CD4-positive, alpha-beta memory T cell (primary cell): ENCODE measurements at regions of chr12 and their contacts with region 1.

Region 1: GRCh38 chr12:121060149-121061001 is 21.3 kb upstream of the OASL start:
- DNase-seq: peak; percentile 69 to 77 (median 74)
- H3K4me3 ChIP-seq: peak overlapping the region; percentile 79 to 81
- H3K4me3 Mint-ChIP-seq: peak overlapping the region; percentile 80 to 91 (median 86)
- H3K27ac ChIP-seq: peak overlapping the region; percentile 66
- H3K27ac Mint-ChIP-seq: peak overlapping the region; percentile 84 to 97 (median 94)
- H3K4me1 ChIP-seq: peaks cover 4% of the 10 kb centered on the region
- H3K4me1 Mint-ChIP-seq: peaks cover 10 to 14% (median 12%) of the 10 kb centered on the region in 4 donors
- H3K27me3 ChIP-seq: no peaks in the 10 kb centered on the region
- H3K27me3 Mint-ChIP-seq: no peaks in the 10 kb centered on the region

Region 2: GRCh38 chr12:120713861-120714482 is 346.4 kb before region 1 on chr12:
- CTCF ChIA-PET with region 1: no interaction called
- POLR2A ChIA-PET with region 1: no interaction called
- intact Hi-C with region 1: no loop called
- DNase-seq: peak; percentile 75 to 83 (median 81)
- H3K4me3 ChIP-seq: no peak overlapping the region
- H3K4me3 Mint-ChIP-seq: peak overlapping the region in 6 of 8 donors; percentile 20 to 81 (median 52)
- H3K27ac ChIP-seq: peak overlapping the region; percentile 11
- H3K27ac Mint-ChIP-seq: peak overlapping the region; percentile 21 to 90 (median 84)
- H3K4me1 ChIP-seq: peaks cover 26% of the 10 kb centered on the region
- H3K4me1 Mint-ChIP-seq: peaks cover 20 to 46% (median 31%) of the 10 kb centered on the region in 4 donors
- H3K27me3 ChIP-seq: no peaks in the 10 kb centered on the region
- H3K27me3 Mint-ChIP-seq: no peaks in the 10 kb centered on the region

Region 3: GRCh38 chr12:120944645-120945231 is 115.6 kb before region 1 on chr12:
- CTCF ChIA-PET with region 1: interaction called, 11 read pairs
- POLR2A ChIA-PET with region 1: no interaction called
- intact Hi-C with region 1: loop called (anchors 1 kb)
- DNase-seq: peak; percentile 43 to 57 (median 51)
- H3K4me3 ChIP-seq: no peak overlapping the region
- H3K4me3 Mint-ChIP-seq: no peak overlapping the region
- H3K27ac ChIP-seq: no peak overlapping the region
- H3K27ac Mint-ChIP-seq: peak overlapping the region in 2 of 7 donors; percentile 25 to 53
- H3K4me1 ChIP-seq: no peaks in the 10 kb centered on the region
- H3K4me1 Mint-ChIP-seq: peaks cover 0 to 4% (median 2%) of the 10 kb centered on the region in 4 donors
- H3K27me3 ChIP-seq: no peaks in the 10 kb centered on the region
- H3K27me3 Mint-ChIP-seq: peaks cover 0 to 1% of the 10 kb centered on the region in 2 donors

Region 4: DNA sequence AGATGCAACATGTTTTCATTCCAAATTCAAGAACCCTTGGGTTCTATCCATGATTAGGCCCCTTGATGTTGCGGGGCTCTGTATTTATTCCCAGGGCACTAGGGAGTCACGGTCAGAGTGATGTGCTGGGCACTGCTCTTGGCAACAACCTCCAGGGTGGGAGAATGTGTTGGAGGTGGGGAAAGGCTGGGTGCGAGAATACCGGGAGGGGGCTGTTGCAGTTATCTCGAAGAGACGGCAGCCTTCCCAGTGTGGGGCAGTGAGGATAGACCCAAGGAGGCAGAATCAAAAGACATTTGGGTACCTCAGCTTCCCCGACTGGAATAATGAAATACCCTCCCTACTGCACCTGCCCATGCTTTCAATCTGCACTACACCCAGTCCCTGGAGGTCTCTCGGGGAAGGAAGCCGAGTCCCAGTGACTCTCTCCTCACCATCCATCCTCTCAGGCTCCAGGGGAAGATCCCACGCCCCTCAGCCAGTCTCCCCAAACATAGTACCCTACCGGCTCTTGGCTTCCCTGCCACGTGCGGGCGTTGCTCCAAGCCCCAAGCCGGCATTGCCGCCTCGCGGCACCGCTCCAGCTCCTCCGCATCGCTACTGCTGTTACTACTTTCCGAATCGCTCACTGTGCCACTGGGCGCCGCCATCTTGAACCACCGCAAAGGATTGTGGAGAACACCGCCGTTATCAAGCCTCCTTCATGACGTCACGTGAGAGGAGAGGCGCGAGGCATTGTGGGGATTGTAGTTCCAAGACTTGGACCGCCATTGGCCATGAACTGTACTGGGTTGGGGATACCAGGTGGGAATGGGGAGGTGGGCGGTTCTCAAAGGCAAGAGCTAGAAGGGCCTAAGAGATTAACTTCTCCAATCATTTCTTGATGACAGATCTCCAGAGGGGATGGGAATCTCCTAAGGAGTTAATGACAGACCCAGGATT is 44.3 kb before region 1 on chr12 and contains the start of gene C12orf43:
- CTCF ChIA-PET with region 1: interaction called, 6 read pairs
- POLR2A ChIA-PET with region 1: interaction called, 5 read pairs
- intact Hi-C with region 1: loop called (anchors 1 kb)
- DNase-seq: peak; percentile 87 to 94 (median 89)
- H3K4me3 ChIP-seq: peak within 1 kb of the TSS; percentile 90 to 91
- H3K4me3 Mint-ChIP-seq: peak within 1 kb of the TSS; percentile 90 to 100 (median 96)
- H3K27ac ChIP-seq: peak within 1 kb of the TSS; percentile 71
- H3K27ac Mint-ChIP-seq: peak within 1 kb of the TSS; percentile 78 to 99 (median 97)
- H3K4me1 ChIP-seq: peaks cover 15% of the 10 kb centered on the region
- H3K4me1 Mint-ChIP-seq: peaks cover 17 to 29% (median 23%) of the 10 kb centered on the region in 4 donors
- H3K27me3 ChIP-seq: no peaks in the 10 kb centered on the region
- H3K27me3 Mint-ChIP-seq: no peaks in the 10 kb centered on the region
- total RNA-seq, gene C12orf43: 13.8 to 15.4 TPM

Region 5: DNA sequence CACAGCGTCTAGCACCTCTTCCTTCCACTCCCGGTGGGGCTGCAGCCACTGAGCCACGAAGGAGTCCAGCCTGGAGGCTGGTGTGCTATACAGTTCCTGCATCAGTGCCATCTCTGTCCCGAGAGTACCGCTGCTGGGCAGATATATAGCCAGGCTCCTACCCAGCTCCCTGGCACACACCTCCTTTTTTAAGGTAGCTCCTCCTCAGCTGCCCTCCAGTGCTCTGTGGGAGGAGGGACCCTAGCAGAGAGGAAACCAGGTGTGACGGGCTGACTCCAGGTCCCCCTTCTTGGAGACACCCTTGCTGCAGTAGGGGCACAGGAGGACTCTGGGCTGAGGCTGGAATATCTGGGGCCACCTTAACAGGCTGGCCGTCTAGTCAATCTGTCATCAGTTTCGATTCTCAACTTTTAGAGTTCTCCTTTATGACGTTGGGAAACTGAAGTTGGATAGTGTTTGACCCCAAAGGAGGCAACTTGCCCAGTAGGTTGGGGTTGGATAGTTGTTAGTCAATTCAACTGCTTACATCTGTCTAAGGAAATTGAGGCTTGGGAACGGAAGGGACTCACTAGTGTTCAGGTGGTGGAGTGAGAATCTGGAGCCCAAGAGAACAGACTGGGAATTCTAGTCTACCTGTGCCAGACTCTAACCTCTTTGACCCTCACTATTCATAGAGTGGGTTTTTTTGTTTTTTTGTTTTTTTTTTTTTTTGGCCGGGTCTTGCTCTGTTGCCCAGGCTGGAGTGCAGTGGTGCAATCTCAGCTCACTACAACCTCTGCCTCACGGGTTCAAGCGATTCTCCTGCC is 21.3 kb before region 1 on chr12 and contains the start of gene OASL:
- CTCF ChIA-PET with region 1: interaction called, 65 read pairs
- POLR2A ChIA-PET with region 1: interaction called, 18 read pairs
- intact Hi-C with region 1: loop called (anchors 1 kb)
- DNase-seq: peak; percentile 62 to 82 (median 62)
- H3K4me3 ChIP-seq: peak within 1 kb of the TSS; percentile 80 to 86
- H3K4me3 Mint-ChIP-seq: peak within 1 kb of the TSS; percentile 97 to 100 (median 98)
- H3K27ac ChIP-seq: peak within 1 kb of the TSS; percentile 78
- H3K27ac Mint-ChIP-seq: peak within 1 kb of the TSS; percentile 96 to 100 (median 98)
- H3K4me1 ChIP-seq: peaks cover 45% of the 10 kb centered on the region
- H3K4me1 Mint-ChIP-seq: peaks cover 28 to 65% (median 38%) of the 10 kb centered on the region in 4 donors
- H3K27me3 ChIP-seq: no peaks in the 10 kb centered on the region
- H3K27me3 Mint-ChIP-seq: peaks cover 3 to 5% of the 10 kb centered on the region in 2 donors
- total RNA-seq, gene OASL: 7.2 to 9.7 TPM

Region 6: DNA sequence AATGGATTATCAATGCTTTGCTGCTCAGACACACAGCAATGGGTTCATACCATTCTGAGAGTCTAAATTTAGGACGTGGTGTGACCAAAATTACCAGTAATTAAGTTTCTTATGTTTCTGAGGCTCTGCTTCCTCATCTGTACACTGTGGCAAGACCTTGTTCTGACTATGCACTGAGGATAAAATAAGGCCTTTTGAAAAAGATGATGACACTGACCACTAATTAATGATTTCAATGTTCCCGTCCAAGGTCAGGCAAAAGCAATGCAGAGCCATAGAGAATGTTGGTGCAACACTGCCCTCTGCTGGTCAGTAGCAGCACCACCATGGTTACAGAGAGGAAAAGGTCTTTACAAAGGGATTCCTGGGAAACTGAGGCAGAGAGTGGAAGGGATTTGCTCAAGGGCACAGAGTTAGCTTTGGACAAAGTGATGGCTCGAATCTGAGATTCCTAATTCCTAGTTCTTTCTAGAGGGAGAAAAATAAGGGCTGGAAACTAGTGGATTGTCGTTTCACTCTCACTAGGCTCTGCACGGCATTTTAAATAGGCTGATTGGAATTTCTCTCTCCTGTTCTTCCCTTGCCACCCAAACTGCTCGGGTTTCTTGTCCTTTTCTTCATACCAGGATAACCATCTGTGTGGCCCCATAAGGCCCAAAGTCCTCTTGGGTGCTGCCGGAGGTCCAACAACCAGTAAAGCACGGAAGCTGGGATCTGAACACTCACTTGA is 50.0 kb after region 1 on chr12:
- CTCF ChIA-PET with region 1: interaction called, 36 read pairs
- POLR2A ChIA-PET with region 1: no interaction called
- intact Hi-C with region 1: loop called (anchors 1 kb)
- DNase-seq: peak in 4 of 5 donors; percentile 50 to 56 (median 54)
- H3K4me3 ChIP-seq: no peak overlapping the region
- H3K4me3 Mint-ChIP-seq: no peak overlapping the region
- H3K27ac ChIP-seq: no peak overlapping the region
- H3K27ac Mint-ChIP-seq: peak overlapping the region in 2 of 7 donors; percentile 2 to 3
- H3K4me1 ChIP-seq: no peaks in the 10 kb centered on the region
- H3K4me1 Mint-ChIP-seq: peaks cover 0 to 5% (median 4%) of the 10 kb centered on the region in 4 donors
- H3K27me3 ChIP-seq: no peaks in the 10 kb centered on the region
- H3K27me3 Mint-ChIP-seq: no peaks in the 10 kb centered on the region

Region 7: GRCh38 chr12:121230538-121230907 is 170.1 kb after region 1 on chr12:
- CTCF ChIA-PET with region 1: interaction called, 6 read pairs
- POLR2A ChIA-PET with region 1: no interaction called
- intact Hi-C with region 1: loop called (anchors 1 kb)
- DNase-seq: no peak
- H3K4me3 ChIP-seq: no peak overlapping the region
- H3K4me3 Mint-ChIP-seq: no peak overlapping the region
- H3K27ac ChIP-seq: no peak overlapping the region
- H3K27ac Mint-ChIP-seq: peak overlapping the region in 6 of 7 donors; percentile 59 to 82 (median 71)
- H3K4me1 ChIP-seq: peaks cover 37% of the 10 kb centered on the region
- H3K4me1 Mint-ChIP-seq: peaks cover 12 to 32% (median 26%) of the 10 kb centered on the region in 4 donors
- H3K27me3 ChIP-seq: no peaks in the 10 kb centered on the region
- H3K27me3 Mint-ChIP-seq: no peaks in the 10 kb centered on the region

Region 8: GRCh38 chr12:122422730-122423257 is 1362.4 kb after region 1 on chr12:
- CTCF ChIA-PET with region 1: no interaction called
- POLR2A ChIA-PET with region 1: no interaction called
- intact Hi-C with region 1: no loop called
- DNase-seq: peak in 3 of 5 donors; percentile 14 to 18 (median 15)
- H3K4me3 ChIP-seq: peak overlapping the region; percentile 53 to 67
- H3K4me3 Mint-ChIP-seq: peak overlapping the region; percentile 88 to 92 (median 90)
- H3K27ac ChIP-seq: peak overlapping the region; percentile 43
- H3K27ac Mint-ChIP-seq: peak overlapping the region; percentile 47 to 93 (median 91)
- H3K4me1 ChIP-seq: peaks cover 43% of the 10 kb centered on the region
- H3K4me1 Mint-ChIP-seq: peaks cover 20 to 37% (median 29%) of the 10 kb centered on the region in 4 donors
- H3K27me3 ChIP-seq: no peaks in the 10 kb centered on the region
- H3K27me3 Mint-ChIP-seq: no peaks in the 10 kb centered on the region